BJ (cell line): ENCODE measurements at regions of chr2 and their contacts with region 1.

Region 1: GRCh38 chr2:241950413-241951315 is 81.1 kb downstream of the RTP5 start:
- DNase-seq: no peak
- H3K4me3 ChIP-seq: no peak overlapping the region
- H3K27me3 ChIP-seq: peaks cover 2% of the 10 kb centered on the region
- CTCF ChIP-seq: peak; percentile 95

Region 2: GRCh38 chr2:240775905-240776304 is 1174.8 kb before region 1 on chr2:
- CTCF ChIA-PET with region 1: no interaction called
- POLR2A ChIA-PET with region 1: no interaction called
- DNase-seq: no peak
- H3K4me3 ChIP-seq: no peak overlapping the region
- H3K27me3 ChIP-seq: no peaks in the 10 kb centered on the region; the same call in 1 of the 2 replicates
- CTCF ChIP-seq: no peak

Region 3: GRCh38 chr2:241702132-241703031 is 248.3 kb before region 1 on chr2:
- CTCF ChIA-PET with region 1: no interaction called
- POLR2A ChIA-PET with region 1: no interaction called
- DNase-seq: peak; percentile 9
- H3K4me3 ChIP-seq: peak overlapping the region; percentile 87
- H3K27me3 ChIP-seq: no peaks in the 10 kb centered on the region
- CTCF ChIP-seq: peak; percentile 48

Region 4: DNA sequence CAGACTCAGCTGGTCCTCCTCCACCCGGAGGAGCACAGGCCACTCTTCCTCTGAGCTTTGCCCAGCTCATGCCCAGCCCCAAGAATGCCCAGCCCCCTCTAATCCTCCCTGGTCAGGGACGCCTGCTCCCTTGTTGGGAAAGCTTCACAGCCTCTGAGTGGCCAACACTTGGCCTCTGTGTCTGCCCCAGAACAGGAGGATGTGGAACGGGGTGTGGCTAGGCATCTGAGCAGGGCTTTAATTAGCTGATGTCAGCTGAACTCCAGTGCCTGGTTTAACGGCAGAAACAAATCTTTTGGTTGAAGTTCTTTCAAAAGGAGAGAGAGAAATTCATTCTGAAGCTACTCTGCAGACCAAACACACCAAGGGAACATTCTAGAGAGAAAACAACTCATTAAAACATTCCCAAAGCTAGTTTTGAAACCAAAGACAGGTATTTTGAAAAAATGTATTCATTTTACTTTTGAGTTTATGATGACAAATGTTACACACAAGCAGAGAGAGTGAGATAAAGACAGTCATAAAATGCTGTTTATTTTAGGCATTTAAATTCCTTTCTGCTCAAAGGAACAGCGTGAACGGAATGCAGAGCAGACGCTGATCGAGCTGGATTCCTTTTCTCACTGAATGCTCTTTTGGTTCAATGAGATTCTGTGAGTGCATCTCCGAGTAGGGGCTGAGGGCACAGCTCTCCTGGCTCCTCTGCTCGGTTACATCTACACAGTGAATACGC is 17.3 kb before region 1 on chr2:
- CTCF ChIA-PET with region 1: interaction called, 18 read pairs
- POLR2A ChIA-PET with region 1: no interaction called
- DNase-seq: peak; percentile 10
- H3K4me3 ChIP-seq: no peak overlapping the region
- H3K27me3 ChIP-seq: no peaks in the 10 kb centered on the region
- CTCF ChIP-seq: no peak

Region 5: GRCh38 chr2:241965931-241966412 is 15.3 kb after region 1 on chr2:
- CTCF ChIA-PET with region 1: interaction called, 20 read pairs
- POLR2A ChIA-PET with region 1: no interaction called
- DNase-seq: peak; percentile 70
- H3K4me3 ChIP-seq: peak overlapping the region; percentile 24; the same call in 1 of the 2 replicates
- H3K27me3 ChIP-seq: no peaks in the 10 kb centered on the region
- CTCF ChIP-seq: no peak